ENCODE measurements at regions of chr4 and their contacts with region 1.

Region 1: GRCh38 chr4:77092975-77093374 is 17.2 kb upstream of the CCNI start:
- DNase-seq: no peak
- ATAC-seq: no peak
- H3K4me3 ChIP-seq: no peak overlapping the region
- H3K27ac ChIP-seq: no peak overlapping the region
- H3K4me1 ChIP-seq: no peaks in the 10 kb centered on the region
- H3K27me3 ChIP-seq: no peaks in the 10 kb centered on the region
- CTCF ChIP-seq: no peak

Region 2: DNA sequence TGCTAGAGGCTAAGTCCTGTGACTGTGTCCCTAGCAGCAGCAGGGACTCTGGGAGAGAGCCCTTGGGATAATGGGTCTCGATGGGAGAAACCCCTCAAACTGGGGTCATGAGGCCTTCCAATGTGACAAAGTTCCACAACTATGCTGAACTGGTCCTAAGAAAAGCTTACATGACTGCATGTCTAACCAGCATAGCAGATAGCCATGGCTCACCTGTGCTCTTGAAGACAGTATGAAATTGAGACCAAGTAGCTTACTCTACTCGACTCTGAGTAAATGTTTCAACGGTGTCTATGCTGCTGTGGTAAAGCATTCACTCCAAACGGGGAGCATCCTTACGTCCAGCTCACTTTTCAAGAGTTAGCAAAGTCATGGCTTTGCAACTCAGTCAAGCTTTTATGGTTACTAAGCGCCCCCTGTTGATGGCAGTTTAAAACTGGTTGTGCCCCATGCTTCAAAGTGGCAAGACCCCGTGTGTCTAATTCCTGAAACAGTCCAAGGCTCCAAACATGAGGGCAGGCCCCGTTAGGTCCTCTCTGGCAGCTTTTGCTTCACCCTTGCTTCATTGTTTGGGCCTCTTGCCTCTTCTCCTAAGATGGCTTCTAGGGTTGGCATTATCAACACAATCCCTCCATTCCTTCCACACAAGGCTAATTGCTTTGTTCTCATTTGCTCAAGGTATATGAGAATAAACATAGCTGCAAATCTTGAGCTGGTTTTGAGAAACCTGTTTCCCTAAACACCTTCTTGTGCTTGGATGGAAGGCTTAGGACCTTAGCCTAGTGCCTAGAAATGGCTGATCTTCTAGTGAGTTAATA is 110.6 kb after region 1 on chr4:
- CTCF ChIA-PET with region 1: interaction called, 6 read pairs
- POLR2A ChIA-PET with region 1: no interaction called
- in situ Hi-C with region 1: no loop called
- intact Hi-C with region 1: loop called (anchors 5 kb)
- DNase-seq: peak; percentile 32
- ATAC-seq: peak; percentile 77
- H3K4me3 ChIP-seq: no peak overlapping the region
- H3K27ac ChIP-seq: no peak overlapping the region
- H3K4me1 ChIP-seq: no peaks in the 10 kb centered on the region
- H3K27me3 ChIP-seq: peaks cover 4% of the 10 kb centered on the region; the same call in 1 of the 2 replicates
- CTCF ChIP-seq: peak; percentile 70

Region 3: GRCh38 chr4:77332696-77333270 is 239.8 kb after region 1 on chr4:
- CTCF ChIA-PET with region 1: no interaction called
- POLR2A ChIA-PET with region 1: no interaction called
- in situ Hi-C with region 1: no loop called
- intact Hi-C with region 1: no loop called
- DNase-seq: no peak
- ATAC-seq: no peak
- H3K4me3 ChIP-seq: no peak overlapping the region
- H3K27ac ChIP-seq: no peak overlapping the region
- H3K4me1 ChIP-seq: no peaks in the 10 kb centered on the region
- H3K27me3 ChIP-seq: no peaks in the 10 kb centered on the region
- CTCF ChIP-seq: no peak

Measured in Panc1 (cell line).